PC-3 (cell line): ENCODE measurements at regions of chr6 and their contacts with region 1.

Region 1: DNA sequence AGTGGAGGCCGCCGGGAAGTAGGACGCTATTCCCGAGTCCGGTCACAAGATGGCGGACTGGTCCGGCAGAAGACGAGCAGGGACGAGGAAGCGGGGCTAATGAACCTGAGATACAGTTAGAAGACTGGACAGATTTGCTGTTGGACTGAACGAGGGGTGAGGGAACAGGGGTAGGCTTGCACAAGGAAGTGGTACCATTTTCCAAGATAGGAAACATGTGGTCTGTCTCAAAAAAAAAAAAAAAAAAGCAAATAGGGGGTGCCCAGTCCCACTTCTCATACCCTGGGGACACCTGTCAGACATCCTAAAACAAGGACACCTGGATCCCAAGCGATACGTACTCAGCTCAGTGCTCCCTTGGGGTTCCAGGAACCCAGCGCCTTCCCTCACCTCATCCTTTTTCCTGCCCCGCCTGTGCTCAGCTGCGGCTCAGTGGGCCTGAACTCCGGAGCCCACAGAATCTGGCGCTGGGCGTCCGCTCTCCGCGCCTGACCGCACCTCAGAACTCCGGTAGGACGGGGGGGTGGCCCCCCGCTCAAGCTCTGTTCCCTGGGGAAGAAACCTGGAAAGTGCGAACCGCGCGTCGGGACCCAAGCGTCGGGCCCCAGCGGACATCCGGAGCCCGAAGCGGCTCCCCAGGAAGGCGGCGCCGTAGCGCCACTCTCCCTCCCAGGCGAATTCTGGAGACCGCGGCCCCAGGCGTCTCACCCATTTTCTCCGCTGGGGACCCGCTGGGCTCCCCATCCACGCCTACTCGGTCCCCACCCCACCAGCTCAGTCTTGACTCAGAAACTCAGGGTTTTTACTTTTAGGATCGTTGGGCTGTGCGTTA is at the start of gene LY6G5C:
- DNase-seq: peak; percentile 84
- ATAC-seq: peak; percentile 78
- H3K4me3 ChIP-seq: peak within 1 kb of the TSS; percentile 67
- H3K27ac ChIP-seq: peak within 1 kb of the TSS; percentile 21
- H3K4me1 ChIP-seq: peaks cover 16% of the 10 kb centered on the region
- H3K27me3 ChIP-seq: no peaks in the 10 kb centered on the region
- CTCF ChIP-seq: peak; percentile 61
- total RNA-seq, gene LY6G5C: 1.6 and 1.8 TPM in 2 replicates

Region 2: DNA sequence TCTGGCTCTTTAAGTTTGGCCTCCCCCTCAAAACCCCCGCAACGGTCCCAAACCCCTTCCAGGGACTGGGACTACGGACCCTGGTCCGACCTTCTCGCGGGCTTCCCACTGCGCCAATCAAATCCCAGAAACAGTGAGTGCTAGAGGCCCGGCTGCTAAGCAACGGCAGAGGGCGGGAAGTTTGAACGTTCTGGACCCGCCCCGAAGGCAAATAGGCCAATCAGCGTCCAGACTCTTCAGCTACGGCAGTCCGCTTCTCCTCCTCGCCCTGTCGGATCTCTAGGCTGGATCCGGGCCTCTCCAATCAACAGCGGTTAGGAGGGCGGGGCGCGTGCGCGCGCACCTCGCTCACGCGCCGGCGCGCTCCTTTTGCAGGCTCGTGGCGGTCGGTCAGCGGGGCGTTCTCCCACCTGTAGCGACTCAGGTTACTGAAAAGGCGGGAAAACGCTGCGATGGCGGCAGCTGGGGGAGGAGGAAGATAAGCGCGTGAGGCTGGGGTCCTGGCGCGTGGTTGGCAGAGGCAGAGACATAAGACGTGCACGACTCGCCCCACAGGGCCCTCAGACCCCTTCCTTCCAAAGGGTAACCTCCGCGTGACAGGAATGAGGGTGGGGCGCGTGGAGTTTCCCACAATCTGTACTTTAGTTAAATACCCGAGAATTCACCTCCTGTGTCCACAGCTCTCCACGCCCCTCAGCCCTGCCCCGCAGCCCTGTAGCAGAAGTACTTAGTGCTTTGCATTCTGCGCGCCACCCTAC is 58.8 kb after region 1 on chr6 and contains the start of gene MSH5:
- CTCF ChIA-PET with region 1: no interaction called
- POLR2A ChIA-PET with region 1: no interaction called
- intact Hi-C with region 1: loop called (anchors 1 kb)
- DNase-seq: peak; percentile 99
- ATAC-seq: peak; percentile 77
- H3K4me3 ChIP-seq: peak within 1 kb of the TSS; percentile 79
- H3K27ac ChIP-seq: peak within 1 kb of the TSS; percentile 87
- H3K4me1 ChIP-seq: peaks cover 42% of the 10 kb centered on the region
- H3K27me3 ChIP-seq: no peaks in the 10 kb centered on the region
- CTCF ChIP-seq: no peak
- total RNA-seq, gene MSH5: 22.7 and 23.0 TPM in 2 replicates

Region 3: DNA sequence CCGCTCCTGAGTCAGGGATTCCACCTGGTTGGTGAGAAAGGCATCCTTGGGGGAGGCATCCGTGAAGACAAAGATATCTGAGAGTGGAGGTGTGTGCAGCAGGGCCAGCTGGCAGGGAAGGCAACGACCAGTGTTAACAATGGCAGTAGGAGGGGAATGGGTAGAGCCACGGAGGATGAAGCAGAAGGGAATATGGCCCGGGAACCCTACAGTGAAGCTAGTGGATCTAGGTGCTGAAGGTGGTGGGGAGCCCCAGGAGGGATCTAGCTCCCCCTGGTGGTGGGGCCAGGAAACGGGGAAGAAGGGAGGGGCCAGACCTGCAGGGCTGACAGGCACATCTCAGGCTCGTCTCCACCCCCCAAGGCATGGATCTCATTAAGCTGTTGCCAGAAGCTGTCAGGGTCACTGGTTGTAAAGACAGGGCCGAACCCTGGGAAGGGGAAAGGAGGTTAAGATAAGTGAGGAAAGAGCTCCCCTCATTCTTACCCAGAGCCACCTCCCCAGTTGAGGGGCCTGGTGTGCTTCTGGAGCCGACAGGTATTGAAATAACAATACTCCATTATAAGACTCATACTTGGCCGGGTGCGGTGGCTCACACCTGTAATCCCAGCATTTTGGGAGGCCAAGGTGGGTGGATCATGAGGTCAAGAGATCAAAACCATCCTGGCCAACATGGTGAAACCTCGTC is 88.8 kb after region 1 on chr6:
- CTCF ChIA-PET with region 1: interaction called, 4 read pairs
- POLR2A ChIA-PET with region 1: no interaction called
- intact Hi-C with region 1: loop called (anchors 1 kb)
- DNase-seq: peak; percentile 85
- ATAC-seq: peak; percentile 64
- H3K4me3 ChIP-seq: no peak overlapping the region
- H3K27ac ChIP-seq: no peak overlapping the region
- H3K4me1 ChIP-seq: no peaks in the 10 kb centered on the region
- H3K27me3 ChIP-seq: no peaks in the 10 kb centered on the region
- CTCF ChIP-seq: peak; percentile 92

Region 4: DNA sequence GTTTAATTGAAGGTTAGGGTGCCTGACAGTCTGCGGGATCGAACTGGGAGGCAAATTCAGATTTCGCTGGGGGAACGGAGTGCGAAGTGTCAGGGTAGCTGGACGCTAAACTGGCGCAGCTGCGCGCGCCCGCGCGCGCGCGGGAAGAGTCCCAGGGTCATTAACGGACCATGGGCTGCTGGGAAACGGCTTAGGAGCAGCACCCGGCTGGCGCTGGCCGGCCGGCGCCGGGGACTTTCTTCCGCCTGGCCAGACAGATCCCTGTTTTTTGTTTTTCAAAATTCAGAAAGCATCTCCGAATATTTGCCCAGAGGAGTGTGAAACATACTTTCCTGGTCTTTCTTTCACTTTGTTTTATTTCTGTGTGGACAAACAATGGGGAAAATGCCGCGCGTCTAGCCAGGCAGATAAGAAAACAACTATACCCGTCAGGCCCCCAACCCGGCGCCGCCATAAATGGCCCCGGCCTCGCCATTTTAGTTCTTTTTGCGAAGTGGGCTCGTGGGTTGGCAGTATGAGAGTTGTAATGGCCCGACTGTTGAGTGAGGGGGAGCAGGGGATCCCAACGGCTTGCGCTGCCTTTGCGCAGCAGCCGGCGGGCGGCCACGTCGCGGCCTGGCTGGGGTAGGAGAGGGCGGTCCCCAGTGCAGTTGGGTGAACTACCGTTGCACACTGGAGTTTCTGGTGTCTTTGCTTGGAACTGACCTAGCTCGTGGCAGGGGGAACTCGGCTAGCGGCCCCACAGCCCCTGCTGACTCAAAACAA is 153.6 kb after region 1 on chr6:
- CTCF ChIA-PET with region 1: no interaction called
- POLR2A ChIA-PET with region 1: no interaction called
- intact Hi-C with region 1: loop called (anchors 10 kb)
- DNase-seq: peak; percentile 85
- ATAC-seq: peak; percentile 75
- H3K4me3 ChIP-seq: peak overlapping the region; percentile 97
- H3K27ac ChIP-seq: peak overlapping the region; percentile 79
- H3K4me1 ChIP-seq: peaks cover 26% of the 10 kb centered on the region
- H3K27me3 ChIP-seq: no peaks in the 10 kb centered on the region
- CTCF ChIP-seq: no peak

Region 5: GRCh38 chr6:31862344-31863227 is 181.5 kb after region 1 on chr6 and contains the start of gene NEU1:
- CTCF ChIA-PET with region 1: interaction called, 3 read pairs
- POLR2A ChIA-PET with region 1: no interaction called
- intact Hi-C with region 1: loop called (anchors 10 kb)
- DNase-seq: peak; percentile 100
- ATAC-seq: peak; percentile 96
- H3K4me3 ChIP-seq: peak within 1 kb of the TSS; percentile 79
- H3K27ac ChIP-seq: peak within 1 kb of the TSS; percentile 77
- H3K4me1 ChIP-seq: peaks cover 5% of the 10 kb centered on the region; the same call in 1 of the 2 replicates
- H3K27me3 ChIP-seq: no peaks in the 10 kb centered on the region
- CTCF ChIP-seq: no peak
- total RNA-seq, gene NEU1: 31.7 and 33.1 TPM in 2 replicates